PC-3 (cell line): ENCODE measurements at regions of chr16 and their contacts with region 1.

Region 1: DNA sequence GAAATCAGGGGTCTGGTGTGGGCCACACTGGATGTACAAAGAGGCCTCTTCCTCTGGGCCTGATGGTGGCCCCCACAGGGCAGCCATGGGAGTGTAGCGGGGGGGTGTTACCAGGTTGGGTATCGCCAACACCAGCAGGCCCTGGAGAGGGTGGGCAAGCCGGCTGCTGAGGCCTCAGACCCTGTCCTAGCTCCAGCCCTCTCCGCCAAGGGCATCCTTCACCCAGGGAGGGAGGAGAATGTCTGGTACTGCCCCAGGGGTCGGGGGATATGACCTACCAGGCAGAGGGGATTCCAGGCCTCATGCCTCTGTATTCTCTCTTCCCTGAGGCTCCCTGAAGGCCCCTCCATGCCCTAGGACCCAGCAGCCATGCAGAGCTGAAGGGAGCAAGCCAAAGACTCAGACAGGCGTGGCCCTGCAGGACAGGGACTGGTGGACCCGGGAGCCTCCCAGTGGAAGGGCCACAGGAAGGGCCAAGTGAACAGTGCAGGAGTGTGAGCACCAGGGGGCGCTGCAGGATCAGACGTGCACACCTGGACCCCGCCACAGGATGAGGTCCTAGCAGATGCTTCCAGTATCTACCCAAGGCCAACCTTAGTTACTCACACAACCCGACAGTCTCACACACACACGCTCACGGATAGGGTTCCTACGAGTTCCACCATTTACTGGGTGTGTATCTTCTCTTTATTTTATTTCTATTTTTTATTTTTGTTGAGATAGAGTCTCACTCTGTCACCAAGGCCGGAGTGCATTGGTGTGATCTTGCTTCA is 10.9 kb upstream of the CES4A start:
- DNase-seq: peak; percentile 82
- ATAC-seq: peak; percentile 98
- H3K4me3 ChIP-seq: no peak overlapping the region
- H3K27ac ChIP-seq: no peak overlapping the region
- H3K4me1 ChIP-seq: no peaks in the 10 kb centered on the region
- H3K27me3 ChIP-seq: no peaks in the 10 kb centered on the region
- CTCF ChIP-seq: peak; percentile 85

Region 2: GRCh38 chr16:66894948-66895688 is 82.4 kb before region 1 on chr16:
- CTCF ChIA-PET with region 1: no interaction called
- POLR2A ChIA-PET with region 1: no interaction called
- intact Hi-C with region 1: no loop called
- DNase-seq: peak; percentile 70
- ATAC-seq: peak; percentile 89
- H3K4me3 ChIP-seq: no peak overlapping the region
- H3K27ac ChIP-seq: no peak overlapping the region
- H3K4me1 ChIP-seq: peaks cover 3% of the 10 kb centered on the region; the same call in 1 of the 2 replicates
- H3K27me3 ChIP-seq: no peaks in the 10 kb centered on the region
- CTCF ChIP-seq: peak; percentile 81

Region 3: DNA sequence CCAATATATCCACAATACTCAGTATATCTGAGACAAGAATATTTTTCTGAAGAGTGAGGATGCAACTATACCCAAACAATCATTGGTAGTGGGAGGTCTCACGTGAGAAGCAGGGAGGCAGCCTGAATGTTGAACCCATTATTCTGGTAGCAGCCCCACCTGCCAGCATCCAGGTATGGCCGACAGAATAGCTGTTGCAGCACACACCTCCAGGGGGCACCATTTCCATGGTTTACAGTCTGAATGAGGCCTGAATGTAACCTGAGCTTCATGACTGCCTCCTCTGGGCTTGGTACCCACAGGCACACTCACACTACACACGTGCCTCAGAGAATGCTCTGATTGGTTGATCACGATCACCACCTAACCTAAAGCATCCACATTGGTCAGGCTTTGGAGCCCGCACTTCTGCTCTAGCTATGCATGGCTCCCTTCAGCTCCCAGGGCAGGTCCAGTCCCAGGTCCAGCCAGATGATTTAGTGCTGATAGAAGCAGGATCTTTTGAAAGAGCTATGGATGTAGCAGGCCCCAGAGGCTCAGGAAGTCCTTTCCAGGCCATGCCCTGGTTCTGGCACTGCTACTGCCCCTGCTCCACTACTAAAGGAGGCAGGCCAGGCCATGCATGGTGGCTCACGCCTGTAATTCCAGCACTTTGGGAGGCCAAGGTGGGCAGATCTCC is 40.4 kb after region 1 on chr16:
- CTCF ChIA-PET with region 1: interaction called, 3 read pairs
- POLR2A ChIA-PET with region 1: no interaction called
- intact Hi-C with region 1: loop called (anchors 1 kb)
- DNase-seq: peak; percentile 93
- ATAC-seq: peak; percentile 88
- H3K4me3 ChIP-seq: no peak overlapping the region
- H3K27ac ChIP-seq: no peak overlapping the region
- H3K4me1 ChIP-seq: peaks cover 7% of the 10 kb centered on the region
- H3K27me3 ChIP-seq: no peaks in the 10 kb centered on the region
- CTCF ChIP-seq: peak; percentile 82

Region 4: DNA sequence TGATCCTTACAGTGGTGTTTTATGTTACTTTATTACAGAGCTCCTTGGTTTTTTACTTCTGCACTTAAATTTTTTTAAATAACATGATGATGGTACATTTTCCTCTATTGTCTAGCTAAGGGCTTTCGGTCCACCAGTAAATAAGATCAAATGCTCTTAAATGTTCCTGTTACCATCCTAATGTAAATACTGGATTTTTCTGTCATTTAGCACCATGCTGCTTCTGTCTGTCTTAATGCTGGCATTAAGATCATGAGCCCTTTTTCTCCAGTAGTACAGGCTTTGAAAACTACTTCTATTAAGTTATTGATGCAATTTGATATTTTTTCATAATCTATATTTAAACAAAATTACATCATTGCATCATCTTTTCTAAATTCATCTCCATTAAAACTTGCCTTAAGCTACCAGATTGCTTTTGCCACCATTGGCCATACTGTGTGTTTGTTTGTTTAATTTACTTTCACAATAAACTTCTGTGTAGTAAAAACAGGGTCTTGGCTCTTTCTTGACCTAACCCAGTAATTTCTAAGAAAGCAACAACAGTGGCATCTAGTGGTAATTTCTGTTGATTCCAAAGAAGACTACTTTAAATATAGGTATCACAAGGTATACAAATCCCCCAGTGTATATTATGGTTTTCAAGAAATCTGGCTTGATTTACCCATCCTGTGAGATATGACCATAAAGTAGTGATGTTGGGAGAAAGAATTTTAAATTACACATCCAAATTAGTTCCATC is 123.2 kb after region 1 on chr16:
- CTCF ChIA-PET with region 1: no interaction called
- POLR2A ChIA-PET with region 1: no interaction called
- intact Hi-C with region 1: loop called (anchors 2 kb)
- DNase-seq: peak; percentile 42
- ATAC-seq: no peak; the same call in 1 of the 2 replicates
- H3K4me3 ChIP-seq: no peak overlapping the region
- H3K27ac ChIP-seq: no peak overlapping the region
- H3K4me1 ChIP-seq: no peaks in the 10 kb centered on the region
- H3K27me3 ChIP-seq: no peaks in the 10 kb centered on the region
- CTCF ChIP-seq: peak; percentile 57

Region 5: GRCh38 chr16:67268136-67268579 is 290.6 kb after region 1 on chr16:
- CTCF ChIA-PET with region 1: no interaction called
- POLR2A ChIA-PET with region 1: interaction called, 29 read pairs
- intact Hi-C with region 1: no loop called
- DNase-seq: peak; percentile 54
- ATAC-seq: peak; percentile 80
- H3K4me3 ChIP-seq: no peak overlapping the region
- H3K27ac ChIP-seq: no peak overlapping the region
- H3K4me1 ChIP-seq: peaks cover 6% of the 10 kb centered on the region; the same call in 1 of the 2 replicates
- H3K27me3 ChIP-seq: no peaks in the 10 kb centered on the region
- CTCF ChIP-seq: no peak

Region 6: GRCh38 chr16:67339453-67339852 is 361.9 kb after region 1 on chr16:
- CTCF ChIA-PET with region 1: no interaction called
- POLR2A ChIA-PET with region 1: no interaction called
- intact Hi-C with region 1: no loop called
- DNase-seq: peak; percentile 31
- ATAC-seq: peak; percentile 51
- H3K4me3 ChIP-seq: no peak overlapping the region
- H3K27ac ChIP-seq: no peak overlapping the region
- H3K4me1 ChIP-seq: no peaks in the 10 kb centered on the region; the same call in 1 of the 2 replicates
- H3K27me3 ChIP-seq: no peaks in the 10 kb centered on the region
- CTCF ChIP-seq: peak; percentile 45